ENCODE measurements at regions of chr21 and their contacts with region 1.

Region 1: DNA sequence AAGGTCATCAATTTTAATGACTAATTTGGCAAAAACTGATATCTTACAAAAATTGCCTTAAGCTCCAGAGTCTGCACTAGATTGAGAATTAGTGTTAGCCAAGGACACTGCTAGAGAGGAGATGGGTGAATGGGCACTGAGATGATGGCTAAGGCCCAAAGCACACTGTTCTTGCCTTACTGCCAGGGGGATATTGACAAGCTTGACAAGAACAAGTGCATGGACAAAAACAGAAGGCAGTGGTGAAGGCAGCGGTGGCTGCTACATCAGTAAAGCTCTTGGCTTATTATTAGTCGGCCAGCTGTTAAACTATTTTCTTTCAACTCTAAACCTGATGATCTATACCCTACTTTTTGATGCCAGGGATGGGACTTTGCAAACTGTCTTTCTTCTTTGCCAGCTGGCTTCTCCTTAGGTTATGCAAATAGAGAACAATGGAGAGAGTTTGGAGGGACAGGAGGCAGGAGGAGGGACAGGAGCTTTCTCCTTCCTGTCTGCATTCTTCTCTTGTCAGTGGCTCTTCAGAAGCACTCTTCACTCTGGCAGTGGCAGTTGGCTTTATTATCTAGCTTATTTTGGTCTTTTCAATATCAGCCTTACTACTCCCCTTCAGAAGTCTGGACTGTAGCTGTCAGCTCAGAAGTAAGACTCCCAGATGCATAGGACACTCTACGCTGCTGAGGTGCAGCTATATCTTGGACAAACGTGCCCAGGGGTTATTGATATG is 853.5 kb upstream of the TMPRSS15 start:
- DNase-seq: no peak
- ATAC-seq: no peak
- H3K4me3 ChIP-seq: no peak overlapping the region
- H3K27ac ChIP-seq: no peak overlapping the region
- H3K4me1 ChIP-seq: no peaks in the 10 kb centered on the region
- H3K27me3 ChIP-seq: no peaks in the 10 kb centered on the region
- CTCF ChIP-seq: no peak

Region 2: DNA sequence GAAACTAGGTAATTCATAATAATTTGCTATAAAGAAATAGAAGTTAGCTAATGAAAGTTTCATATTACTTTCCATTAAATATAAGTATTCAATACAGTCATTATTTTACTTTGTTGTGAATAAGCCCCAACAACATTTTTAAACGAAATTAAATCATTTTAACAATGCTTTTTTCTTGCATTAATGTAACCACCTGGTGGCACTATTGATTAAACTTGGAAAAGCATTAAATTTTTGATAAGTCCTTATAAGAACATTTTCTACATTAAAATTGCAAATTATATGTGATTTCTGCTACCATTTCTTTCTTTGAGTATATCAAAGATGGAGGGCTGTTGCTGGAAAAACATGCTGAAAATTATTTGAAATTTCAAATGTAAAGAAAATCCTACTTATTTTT is 65.3 kb after region 1 on chr21:
- intact Hi-C with region 1: loop called (anchors 10 kb)
- DNase-seq: no peak
- ATAC-seq: no peak
- H3K4me3 ChIP-seq: no peak overlapping the region
- H3K27ac ChIP-seq: no peak overlapping the region
- H3K4me1 ChIP-seq: no peaks in the 10 kb centered on the region
- H3K27me3 ChIP-seq: no peaks in the 10 kb centered on the region
- CTCF ChIP-seq: no peak